Lower leg skin (tissue), 4 donors: ENCODE measurements at regions of chr9 and their contacts with region 1.

Region 1: GRCh38 chr9:83294816-83295215 is 231.9 kb upstream of the RASEF start:
- DNase-seq: no peak
- H3K4me3 ChIP-seq: no peak overlapping the region
- CTCF ChIP-seq: no peak
- POLR2A ChIP-seq: no peak

Region 2: GRCh38 chr9:83266666-83267496 is 27.9 kb before region 1 on chr9:
- intact Hi-C with region 1: loop called (anchors 1 kb)
- DNase-seq: no peak
- H3K4me3 ChIP-seq: no peak overlapping the region
- CTCF ChIP-seq: no peak
- POLR2A ChIP-seq: no peak